ENCODE measurements at regions of chr18 and their contacts with region 1.

Region 1: DNA sequence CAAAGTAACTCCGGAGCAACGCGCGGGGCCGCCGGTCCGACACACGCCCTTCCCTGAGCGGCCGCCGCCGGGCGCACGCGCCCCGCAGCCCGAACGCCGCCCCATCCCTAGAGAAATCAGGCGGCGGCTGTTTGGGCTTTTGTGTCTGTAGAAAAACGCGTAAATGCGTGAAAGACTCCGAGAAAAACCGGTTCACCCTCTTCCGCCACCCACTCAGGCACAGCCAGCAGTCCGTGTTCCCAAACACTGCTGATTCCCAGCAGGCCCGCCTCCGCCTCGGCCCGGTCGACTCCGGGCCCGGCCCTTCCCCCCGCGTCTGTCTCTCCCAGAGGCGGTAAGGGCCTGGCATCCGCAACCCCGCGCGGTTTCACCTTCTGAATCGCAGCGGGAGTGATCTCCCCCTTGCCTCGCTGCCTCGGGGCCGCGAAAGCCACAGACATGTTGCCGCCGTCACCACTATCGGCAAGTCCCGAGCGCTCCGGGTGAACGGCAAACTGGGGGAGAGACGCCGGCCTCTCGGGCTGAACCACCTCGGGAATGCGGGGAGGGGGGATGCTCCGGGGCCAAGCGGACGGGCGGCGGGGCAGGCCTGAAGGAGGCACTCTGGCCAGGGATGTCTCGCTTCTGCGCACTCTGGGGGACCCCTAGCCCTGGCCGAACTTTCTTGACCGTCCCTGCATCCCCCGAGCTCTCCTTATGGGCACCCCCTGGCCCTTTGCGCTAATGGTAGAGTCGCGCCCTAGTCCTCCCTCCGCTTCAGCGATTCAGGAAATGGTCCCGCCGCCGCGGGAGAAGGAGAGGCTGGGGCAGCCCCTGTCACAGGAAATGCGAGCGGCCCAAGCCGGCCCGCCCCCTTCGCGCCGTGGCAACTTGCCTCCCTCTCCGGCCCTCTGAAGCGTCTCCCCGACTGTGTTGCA is at the start of gene SS18:
- DNase-seq: peak; percentile 94
- H3K4me3 Mint-ChIP-seq: peak within 1 kb of the TSS; percentile 89
- H3K27ac Mint-ChIP-seq: peak within 1 kb of the TSS; percentile 93
- H3K4me1 Mint-ChIP-seq: peaks cover 30% of the 10 kb centered on the region
- H3K27me3 Mint-ChIP-seq: no peaks in the 10 kb centered on the region
- total RNA-seq, gene SS18: 49.1 to 51.5 TPM

Region 2: DNA sequence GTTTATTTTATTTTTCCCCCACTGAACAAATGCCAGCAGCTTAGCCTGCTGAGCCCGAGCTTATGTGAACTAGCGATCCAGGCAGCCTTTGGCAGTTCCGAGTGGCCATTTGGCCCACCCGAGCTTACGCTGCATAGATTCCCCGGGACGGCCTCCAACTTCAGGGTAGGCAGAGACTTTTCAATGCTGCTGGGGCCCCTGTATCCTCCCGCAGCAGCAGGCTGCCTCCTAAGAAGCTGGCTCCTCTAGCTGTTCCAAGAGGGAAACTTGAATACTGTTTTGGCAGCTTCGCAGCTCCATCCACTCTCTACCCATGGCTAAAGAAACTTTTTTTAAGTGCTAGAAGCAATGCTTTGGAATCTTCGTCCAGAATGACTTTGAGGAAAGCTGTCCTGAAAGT is 295.2 kb before region 1 on chr18:
- CTCF ChIA-PET with region 1: no interaction called
- POLR2A ChIA-PET with region 1: no interaction called
- intact Hi-C with region 1: no loop called
- DNase-seq: no peak
- H3K4me3 Mint-ChIP-seq: no peak overlapping the region
- H3K27ac Mint-ChIP-seq: no peak overlapping the region
- H3K4me1 Mint-ChIP-seq: no peaks in the 10 kb centered on the region
- H3K27me3 Mint-ChIP-seq: no peaks in the 10 kb centered on the region

Region 3: GRCh38 chr18:26040051-26040656 is 50.2 kb before region 1 on chr18:
- CTCF ChIA-PET with region 1: no interaction called
- POLR2A ChIA-PET with region 1: no interaction called
- intact Hi-C with region 1: loop called (anchors 5 kb)
- DNase-seq: no peak
- H3K4me3 Mint-ChIP-seq: no peak overlapping the region
- H3K27ac Mint-ChIP-seq: no peak overlapping the region
- H3K4me1 Mint-ChIP-seq: peaks cover 15% of the 10 kb centered on the region
- H3K27me3 Mint-ChIP-seq: no peaks in the 10 kb centered on the region

Region 4: DNA sequence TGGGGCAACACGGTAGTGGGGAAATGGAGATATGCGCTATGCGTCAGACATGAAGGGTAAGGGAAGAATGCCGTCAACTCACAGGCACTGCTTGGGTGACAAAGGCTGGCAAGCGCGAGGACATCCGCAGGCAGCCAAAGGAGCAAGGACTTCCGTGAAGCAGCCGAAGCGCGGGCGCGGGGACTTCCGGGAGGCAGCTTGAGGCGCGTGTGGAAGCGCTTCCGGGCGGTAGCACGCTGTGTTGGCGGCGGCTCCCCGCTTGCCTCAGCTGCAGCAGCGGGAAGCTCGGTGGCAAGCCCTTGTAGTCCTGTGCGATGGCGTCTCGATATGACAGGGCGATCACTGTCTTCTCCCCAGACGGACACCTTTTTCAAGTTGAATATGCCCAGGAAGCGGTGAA is 43.3 kb after region 1 on chr18 and contains the start of gene PSMA8:
- CTCF ChIA-PET with region 1: no interaction called
- POLR2A ChIA-PET with region 1: no interaction called
- intact Hi-C with region 1: loop called (anchors 1 kb)
- DNase-seq: peak; percentile 72
- H3K4me3 Mint-ChIP-seq: peak within 1 kb of the TSS; percentile 70
- H3K27ac Mint-ChIP-seq: peak within 1 kb of the TSS; percentile 78
- H3K4me1 Mint-ChIP-seq: no peaks in the 10 kb centered on the region
- H3K27me3 Mint-ChIP-seq: no peaks in the 10 kb centered on the region
- total RNA-seq, gene PSMA8: 1.3 to 1.7 TPM

Region 5: DNA sequence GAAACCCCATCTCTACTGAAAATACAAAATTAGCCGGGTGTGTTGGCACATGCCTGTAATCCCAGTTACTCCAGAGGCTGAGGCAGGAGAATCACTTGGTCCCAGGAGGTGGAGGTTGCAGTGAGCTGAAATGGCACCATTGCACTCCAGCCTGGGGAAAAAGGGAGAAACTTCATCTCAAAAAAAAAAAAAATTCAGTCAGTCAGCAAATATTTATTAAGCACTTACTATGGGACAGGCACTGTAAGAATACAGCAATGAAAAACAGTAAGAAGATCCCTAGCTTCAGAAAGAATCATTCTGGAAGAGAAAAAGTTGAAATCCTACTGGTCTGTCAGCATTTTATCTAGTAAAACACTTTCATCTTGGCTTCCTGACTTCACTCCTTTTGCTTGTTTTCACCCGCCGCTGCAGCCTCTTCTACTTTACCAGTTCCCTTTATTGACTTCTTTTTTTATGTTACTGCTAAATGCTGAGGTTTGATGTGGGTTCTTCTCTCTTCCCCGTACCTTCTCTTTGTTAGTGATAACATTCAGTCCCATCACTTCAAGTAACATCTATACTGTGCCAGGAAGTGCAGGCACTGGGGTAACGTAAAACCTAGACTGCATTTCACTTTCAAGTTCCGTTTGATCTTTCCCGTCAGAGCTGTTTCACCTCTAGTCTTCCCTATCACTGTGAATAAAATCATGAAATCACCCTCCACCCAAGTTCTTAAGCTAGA is 125.0 kb after region 1 on chr18:
- CTCF ChIA-PET with region 1: interaction called, 3 read pairs
- POLR2A ChIA-PET with region 1: no interaction called
- intact Hi-C with region 1: loop called (anchors 1 kb)
- DNase-seq: peak; percentile 69
- H3K4me3 Mint-ChIP-seq: peak overlapping the region; percentile 56
- H3K27ac Mint-ChIP-seq: peak overlapping the region; percentile 83
- H3K4me1 Mint-ChIP-seq: peaks cover 21% of the 10 kb centered on the region
- H3K27me3 Mint-ChIP-seq: no peaks in the 10 kb centered on the region

Region 6: GRCh38 chr18:26226229-26227005 is 136.0 kb after region 1 on chr18 and contains the start of gene TAF4B:
- CTCF ChIA-PET with region 1: no interaction called
- POLR2A ChIA-PET with region 1: no interaction called
- intact Hi-C with region 1: loop called (anchors 1 kb)
- DNase-seq: peak; percentile 95
- H3K4me3 Mint-ChIP-seq: peak within 1 kb of the TSS; percentile 90
- H3K27ac Mint-ChIP-seq: peak within 1 kb of the TSS; percentile 94
- H3K4me1 Mint-ChIP-seq: peaks cover 35% of the 10 kb centered on the region
- H3K27me3 Mint-ChIP-seq: no peaks in the 10 kb centered on the region
- total RNA-seq, gene TAF4B: 12.5 to 12.7 TPM

Measured in activated CD4-positive, alpha-beta memory T cell treated with anti-CD3 and anti-CD28 coated beads for 36 hours (primary cell).